CD8-positive, alpha-beta T cell (primary cell): ENCODE measurements at regions of chr13 and their contacts with region 1.

Region 1: GRCh38 chr13:97109841-97110492 is 112.2 kb upstream of the MBNL2 start:
- DNase-seq: peak; percentile 63 to 90 (median 79)
- ATAC-seq: peak; percentile 90
- H3K4me3 ChIP-seq: no peak overlapping the region
- H3K4me3 Mint-ChIP-seq: peak overlapping the region; percentile 51
- H3K27ac ChIP-seq: no peak overlapping the region
- H3K27ac Mint-ChIP-seq: no peak overlapping the region
- H3K4me1 ChIP-seq: peaks cover 6% of the 10 kb centered on the region
- H3K4me1 Mint-ChIP-seq: peaks cover 11% of the 10 kb centered on the region
- H3K27me3 ChIP-seq: no peaks in the 10 kb centered on the region
- H3K27me3 Mint-ChIP-seq: peaks cover 3% of the 10 kb centered on the region
- CTCF ChIP-seq: peak; percentile 92

Region 2: GRCh38 chr13:96871469-96871868 is 238.5 kb before region 1 on chr13:
- CTCF ChIA-PET with region 1: no interaction called
- POLR2A ChIA-PET with region 1: no interaction called
- intact Hi-C with region 1: no loop called
- DNase-seq: no peak
- ATAC-seq: no peak
- H3K4me3 ChIP-seq: no peak overlapping the region
- H3K4me3 Mint-ChIP-seq: no peak overlapping the region
- H3K27ac ChIP-seq: no peak overlapping the region
- H3K27ac Mint-ChIP-seq: no peak overlapping the region
- H3K4me1 ChIP-seq: no peaks in the 10 kb centered on the region
- H3K4me1 Mint-ChIP-seq: no peaks in the 10 kb centered on the region
- H3K27me3 ChIP-seq: no peaks in the 10 kb centered on the region
- H3K27me3 Mint-ChIP-seq: no peaks in the 10 kb centered on the region
- CTCF ChIP-seq: no peak

Region 3: GRCh38 chr13:97142452-97142851 is 32.5 kb after region 1 on chr13:
- CTCF ChIA-PET with region 1: interaction called, 12 read pairs
- POLR2A ChIA-PET with region 1: no interaction called
- intact Hi-C with region 1: no loop called
- DNase-seq: no peak
- ATAC-seq: no peak
- H3K4me3 ChIP-seq: no peak overlapping the region
- H3K4me3 Mint-ChIP-seq: peak overlapping the region; percentile 49
- H3K27ac ChIP-seq: no peak overlapping the region
- H3K27ac Mint-ChIP-seq: no peak overlapping the region
- H3K4me1 ChIP-seq: no peaks in the 10 kb centered on the region
- H3K4me1 Mint-ChIP-seq: peaks cover 6% of the 10 kb centered on the region
- H3K27me3 ChIP-seq: no peaks in the 10 kb centered on the region
- H3K27me3 Mint-ChIP-seq: peaks cover 6% of the 10 kb centered on the region
- CTCF ChIP-seq: no peak

Region 4: GRCh38 chr13:97235549-97236231 is 125.7 kb after region 1 on chr13:
- CTCF ChIA-PET with region 1: interaction called, 10 read pairs
- POLR2A ChIA-PET with region 1: no interaction called
- intact Hi-C with region 1: loop called in 1 of 2 experiments (anchors 10 kb)
- DNase-seq: no peak
- ATAC-seq: no peak
- H3K4me3 ChIP-seq: no peak overlapping the region
- H3K4me3 Mint-ChIP-seq: no peak overlapping the region
- H3K27ac ChIP-seq: no peak overlapping the region
- H3K27ac Mint-ChIP-seq: no peak overlapping the region
- H3K4me1 ChIP-seq: no peaks in the 10 kb centered on the region
- H3K4me1 Mint-ChIP-seq: peaks cover 93% of the 10 kb centered on the region
- H3K27me3 ChIP-seq: no peaks in the 10 kb centered on the region
- H3K27me3 Mint-ChIP-seq: no peaks in the 10 kb centered on the region
- CTCF ChIP-seq: no peak

Region 5: DNA sequence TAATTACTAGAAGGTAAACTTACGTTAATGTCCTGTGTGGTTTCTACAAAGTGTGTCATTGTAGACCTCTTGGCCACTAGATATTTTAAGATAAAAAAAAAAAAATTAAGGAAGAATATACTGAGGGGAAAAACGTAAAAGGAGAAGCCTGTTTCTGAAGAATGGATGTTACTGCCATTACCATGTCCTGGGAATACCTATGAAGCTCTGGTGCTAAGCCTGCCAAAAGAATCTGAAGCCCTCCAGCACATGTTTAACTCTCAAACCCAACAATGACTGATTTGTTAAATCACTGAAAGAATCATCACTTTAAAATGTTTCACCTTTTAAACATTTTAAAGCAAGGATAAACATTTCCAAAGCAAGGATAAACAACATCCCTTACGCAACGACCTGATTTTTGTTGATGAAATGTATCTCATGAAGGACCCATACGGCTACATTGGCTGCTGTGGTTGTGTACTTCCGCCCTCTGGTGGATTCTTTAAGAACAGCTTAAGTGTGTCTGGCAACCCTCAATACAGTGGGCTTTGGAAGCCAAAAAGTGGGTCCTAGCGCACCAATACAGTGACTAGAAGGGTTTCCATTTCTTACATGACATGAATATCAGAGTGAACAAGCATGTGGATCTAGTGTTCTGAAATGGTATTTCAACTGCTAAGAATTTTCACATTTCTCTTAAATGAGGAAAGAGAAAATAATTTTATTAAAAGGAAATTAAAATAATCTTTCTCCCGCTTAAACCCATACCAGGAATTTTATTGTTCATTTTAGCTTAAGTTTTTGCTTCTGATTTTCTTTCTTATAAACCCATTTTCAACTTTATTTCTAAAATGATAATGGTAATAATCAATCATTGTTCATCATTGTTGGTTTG is 249.5 kb after region 1 on chr13:
- CTCF ChIA-PET with region 1: interaction called, 339 read pairs
- POLR2A ChIA-PET with region 1: no interaction called
- intact Hi-C with region 1: loop called (anchors 1 kb)
- DNase-seq: peak in 8 of 9 experiments; percentile 29 to 79 (median 43)
- ATAC-seq: peak; percentile 95
- H3K4me3 ChIP-seq: no peak overlapping the region
- H3K4me3 Mint-ChIP-seq: no peak overlapping the region
- H3K27ac ChIP-seq: no peak overlapping the region
- H3K27ac Mint-ChIP-seq: no peak overlapping the region
- H3K4me1 ChIP-seq: no peaks in the 10 kb centered on the region
- H3K4me1 Mint-ChIP-seq: peaks cover 3% of the 10 kb centered on the region
- H3K27me3 ChIP-seq: no peaks in the 10 kb centered on the region
- H3K27me3 Mint-ChIP-seq: no peaks in the 10 kb centered on the region
- CTCF ChIP-seq: peak; percentile 75

Region 6: GRCh38 chr13:97432917-97433726 is 323.2 kb after region 1 on chr13:
- CTCF ChIA-PET with region 1: interaction called, 7 read pairs
- POLR2A ChIA-PET with region 1: no interaction called
- intact Hi-C with region 1: loop called in 1 of 2 experiments (anchors 5 kb)
- DNase-seq: peak; percentile 95 to 99 (median 98)
- ATAC-seq: peak; percentile 70
- H3K4me3 ChIP-seq: peak overlapping the region; percentile 79 to 100
- H3K4me3 Mint-ChIP-seq: peak overlapping the region; percentile 94
- H3K27ac ChIP-seq: peak overlapping the region; percentile 97 to 100
- H3K27ac Mint-ChIP-seq: peak overlapping the region; percentile 100
- H3K4me1 ChIP-seq: peaks cover 12% of the 10 kb centered on the region
- H3K4me1 Mint-ChIP-seq: peaks cover 30% of the 10 kb centered on the region
- H3K27me3 ChIP-seq: no peaks in the 10 kb centered on the region
- H3K27me3 Mint-ChIP-seq: no peaks in the 10 kb centered on the region
- CTCF ChIP-seq: no peak